ENCODE measurements at regions of chrX and their contacts with region 1.

Region 1: DNA sequence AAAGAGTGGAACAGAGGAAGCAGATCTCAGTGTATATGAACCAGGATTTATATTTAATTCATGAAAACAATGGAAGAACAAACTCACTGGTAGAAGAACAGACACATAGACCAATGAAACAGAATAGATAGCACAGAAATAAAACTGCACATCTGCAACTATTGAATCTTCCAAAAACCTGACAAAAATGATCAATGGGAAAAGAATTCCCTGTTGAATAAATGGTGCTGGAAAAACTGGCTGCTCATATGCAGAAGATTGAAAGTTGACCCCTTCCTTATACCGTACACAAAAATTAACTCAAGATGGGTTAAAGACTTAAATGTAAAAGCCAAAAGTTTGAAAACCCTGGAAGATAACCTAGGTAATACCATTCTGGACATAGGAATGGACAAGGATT is 391.0 kb downstream of the MAGEB5 start:
- DNase-seq: no peak
- ATAC-seq: no peak
- H3K4me3 Mint-ChIP-seq: no peak overlapping the region
- H3K27ac Mint-ChIP-seq: no peak overlapping the region
- H3K4me1 Mint-ChIP-seq: no peaks in the 10 kb centered on the region
- H3K27me3 Mint-ChIP-seq: no peaks in the 10 kb centered on the region
- CTCF ChIP-seq: no peak

Region 2: GRCh38 chrX:26522501-26522900 is 84.5 kb before region 1 on chrX:
- CTCF ChIA-PET with region 1: no interaction called
- POLR2A ChIA-PET with region 1: no interaction called
- intact Hi-C with region 1: no loop called
- DNase-seq: no peak
- ATAC-seq: no peak
- H3K4me3 Mint-ChIP-seq: no peak overlapping the region
- H3K27ac Mint-ChIP-seq: no peak overlapping the region
- H3K4me1 Mint-ChIP-seq: no peaks in the 10 kb centered on the region
- H3K27me3 Mint-ChIP-seq: no peaks in the 10 kb centered on the region
- CTCF ChIP-seq: no peak

Region 3: GRCh38 chrX:26672571-26672970 is 65.6 kb after region 1 on chrX:
- CTCF ChIA-PET with region 1: no interaction called
- POLR2A ChIA-PET with region 1: no interaction called
- intact Hi-C with region 1: loop called (anchors 10 kb)
- DNase-seq: no peak
- ATAC-seq: no peak
- H3K4me3 Mint-ChIP-seq: no peak overlapping the region
- H3K27ac Mint-ChIP-seq: no peak overlapping the region
- H3K4me1 Mint-ChIP-seq: no peaks in the 10 kb centered on the region
- H3K27me3 Mint-ChIP-seq: no peaks in the 10 kb centered on the region
- CTCF ChIP-seq: no peak